A673 (cell line): ENCODE measurements at regions of chr4 and their contacts with region 1.

Region 1: GRCh38 chr4:110631584-110632505 is 9.0 kb upstream of the PITX2 start:
- DNase-seq: peak; percentile 92
- H3K4me3 ChIP-seq: peak overlapping the region; percentile 40
- H3K27ac ChIP-seq: no peak overlapping the region
- H3K4me1 ChIP-seq: no peaks in the 10 kb centered on the region
- H3K27me3 ChIP-seq: peaks cover 4% of the 10 kb centered on the region
- CTCF ChIP-seq: peak; percentile 97

Region 2: GRCh38 chr4:110840221-110840654 is 208.4 kb after region 1 on chr4:
- CTCF ChIA-PET with region 1: no interaction called
- POLR2A ChIA-PET with region 1: no interaction called
- intact Hi-C with region 1: no loop called
- DNase-seq: no peak
- H3K4me3 ChIP-seq: no peak overlapping the region
- H3K27ac ChIP-seq: no peak overlapping the region
- H3K4me1 ChIP-seq: no peaks in the 10 kb centered on the region
- H3K27me3 ChIP-seq: no peaks in the 10 kb centered on the region
- CTCF ChIP-seq: no peak

Region 3: DNA sequence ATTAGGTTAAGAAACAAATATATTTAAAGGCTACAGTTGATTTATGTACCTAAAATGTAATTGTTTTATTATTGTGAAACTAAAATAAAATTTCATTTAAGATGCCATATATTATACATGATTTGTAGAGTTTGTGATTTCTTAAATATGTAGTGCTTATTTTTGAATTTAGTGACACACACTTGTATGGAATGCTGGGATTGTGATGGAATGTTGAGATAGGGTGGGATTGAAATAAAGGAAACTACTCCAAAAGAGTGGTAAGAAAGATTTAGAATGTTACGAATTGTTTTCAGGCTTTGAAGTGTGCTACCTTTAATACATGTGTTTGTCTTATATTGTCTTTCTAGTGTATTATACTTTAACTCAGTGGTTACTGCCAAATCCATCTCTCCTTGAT is 321.3 kb after region 1 on chr4:
- CTCF ChIA-PET with region 1: no interaction called
- POLR2A ChIA-PET with region 1: no interaction called
- intact Hi-C with region 1: no loop called
- DNase-seq: no peak
- H3K4me3 ChIP-seq: no peak overlapping the region
- H3K27ac ChIP-seq: no peak overlapping the region
- H3K4me1 ChIP-seq: no peaks in the 10 kb centered on the region
- H3K27me3 ChIP-seq: no peaks in the 10 kb centered on the region
- CTCF ChIP-seq: no peak

Region 4: GRCh38 chr4:110970642-110971041 is 338.8 kb after region 1 on chr4:
- CTCF ChIA-PET with region 1: no interaction called
- POLR2A ChIA-PET with region 1: no interaction called
- intact Hi-C with region 1: loop called (anchors 5 kb)
- DNase-seq: peak; percentile 79
- H3K4me3 ChIP-seq: no peak overlapping the region
- H3K27ac ChIP-seq: no peak overlapping the region
- H3K4me1 ChIP-seq: no peaks in the 10 kb centered on the region
- H3K27me3 ChIP-seq: no peaks in the 10 kb centered on the region
- CTCF ChIP-seq: peak; percentile 78

Region 5: GRCh38 chr4:111283061-111283677 is 651.3 kb after region 1 on chr4:
- CTCF ChIA-PET with region 1: no interaction called
- POLR2A ChIA-PET with region 1: no interaction called
- intact Hi-C with region 1: loop called (anchors 1 kb)
- DNase-seq: peak; percentile 67
- H3K4me3 ChIP-seq: no peak overlapping the region
- H3K27ac ChIP-seq: no peak overlapping the region
- H3K4me1 ChIP-seq: no peaks in the 10 kb centered on the region
- H3K27me3 ChIP-seq: no peaks in the 10 kb centered on the region
- CTCF ChIP-seq: peak; percentile 88

Region 6: GRCh38 chr4:111631215-111631999 is 999.6 kb after region 1 on chr4:
- CTCF ChIA-PET with region 1: interaction called, 7 read pairs
- POLR2A ChIA-PET with region 1: no interaction called
- intact Hi-C with region 1: loop called (anchors 1 kb)
- DNase-seq: peak; percentile 61
- H3K4me3 ChIP-seq: no peak overlapping the region
- H3K27ac ChIP-seq: no peak overlapping the region
- H3K4me1 ChIP-seq: peaks cover 32% of the 10 kb centered on the region
- H3K27me3 ChIP-seq: no peaks in the 10 kb centered on the region
- CTCF ChIP-seq: peak; percentile 64

Region 7: DNA sequence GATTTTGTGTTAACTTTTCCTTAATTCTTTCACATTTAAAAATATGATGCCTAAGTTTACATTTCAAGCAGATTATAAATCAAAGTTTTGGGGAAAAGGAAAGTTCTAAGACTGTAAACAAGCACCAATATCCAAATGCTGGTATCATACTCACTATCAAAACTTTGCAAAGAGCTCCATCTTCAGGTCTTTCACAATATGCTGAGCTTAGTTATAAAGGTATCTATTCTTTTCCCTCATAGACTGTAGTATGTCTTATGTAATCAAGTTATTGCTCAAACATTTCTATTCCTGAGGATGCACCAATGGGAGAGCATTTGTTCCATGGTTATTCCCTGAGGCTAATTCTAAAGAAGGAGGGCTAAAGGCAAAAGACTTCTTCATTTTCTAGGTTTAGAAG is 1305.5 kb after region 1 on chr4:
- CTCF ChIA-PET with region 1: no interaction called
- POLR2A ChIA-PET with region 1: no interaction called
- intact Hi-C with region 1: loop called (anchors 10 kb)
- DNase-seq: peak; percentile 67
- H3K4me3 ChIP-seq: no peak overlapping the region
- H3K27ac ChIP-seq: no peak overlapping the region
- H3K4me1 ChIP-seq: no peaks in the 10 kb centered on the region
- H3K27me3 ChIP-seq: no peaks in the 10 kb centered on the region
- CTCF ChIP-seq: peak; percentile 58